CD8-positive, alpha-beta memory T cell (primary cell): ENCODE measurements at regions of chr5 and their contacts with region 1.

Region 1: GRCh38 chr5:172777881-172778814 is 7.2 kb upstream of the DUSP1 start:
- DNase-seq: no peak
- H3K4me3 ChIP-seq: peak overlapping the region; percentile 7
- H3K4me3 Mint-ChIP-seq: peak overlapping the region; percentile 45 to 74 (median 68)
- H3K27ac ChIP-seq: peak overlapping the region; percentile 74
- H3K27ac Mint-ChIP-seq: peak overlapping the region; percentile 93 to 99 (median 96)
- H3K4me1 ChIP-seq: peaks cover 35% of the 10 kb centered on the region
- H3K4me1 Mint-ChIP-seq: peaks cover 45 to 49% (median 47%) of the 10 kb centered on the region in 3 donors
- H3K27me3 ChIP-seq: no peaks in the 10 kb centered on the region
- H3K27me3 Mint-ChIP-seq: no peaks in the 10 kb centered on the region

Region 2: GRCh38 chr5:172764849-172765765 is 13.0 kb before region 1 on chr5:
- CTCF ChIA-PET with region 1: interaction called, 5 read pairs
- POLR2A ChIA-PET with region 1: interaction called, 12 read pairs
- DNase-seq: peak; percentile 94 to 99 (median 98)
- H3K4me3 ChIP-seq: peak overlapping the region; percentile 60
- H3K4me3 Mint-ChIP-seq: peak overlapping the region; percentile 80 to 98 (median 94)
- H3K27ac ChIP-seq: peak overlapping the region; percentile 92
- H3K27ac Mint-ChIP-seq: peak overlapping the region; percentile 98 to 100 (median 99)
- H3K4me1 ChIP-seq: peaks cover 41% of the 10 kb centered on the region
- H3K4me1 Mint-ChIP-seq: peaks cover 50 to 65% (median 56%) of the 10 kb centered on the region in 3 donors
- H3K27me3 ChIP-seq: no peaks in the 10 kb centered on the region
- H3K27me3 Mint-ChIP-seq: peaks cover 0 to 23% of the 10 kb centered on the region in 2 donors